ENCODE measurements at regions of chr2 and their contacts with region 1.

Region 1: DNA sequence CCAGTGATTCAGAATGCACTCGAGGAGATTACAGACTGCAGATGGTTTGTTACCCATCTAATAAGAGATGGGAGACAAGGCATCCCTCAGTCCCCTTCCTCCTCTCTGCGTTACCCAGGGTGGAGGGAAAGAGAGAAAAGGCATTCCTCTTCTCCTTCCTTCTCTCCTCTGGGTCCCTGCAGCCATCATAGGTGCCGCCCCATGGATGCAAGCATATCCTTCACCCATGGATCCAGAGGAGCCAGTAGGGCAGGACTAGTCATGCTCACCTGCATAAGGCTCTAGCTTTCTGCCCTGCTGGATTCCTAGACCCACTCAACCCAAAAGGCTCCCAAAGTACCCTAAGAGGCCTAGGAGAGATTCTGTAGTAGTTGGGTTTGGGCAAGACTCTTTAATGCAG is 20.4 kb downstream of the CMPK2 start:
- DNase-seq: peak; percentile 41 to 70 (median 52)
- ATAC-seq: no peak
- H3K4me3 ChIP-seq: no peak overlapping the region
- H3K27ac ChIP-seq: no peak overlapping the region
- H3K4me1 ChIP-seq: peaks cover 5 to 13% of the 10 kb centered on the region in 2 experiments; a peak in 4 of 5 replicates
- H3K27me3 ChIP-seq: no peaks in the 10 kb centered on the region
- CTCF ChIP-seq: no peak
- EP300 ChIP-seq: no peak; the same call in 1 of the 2 replicates
- POLR2A ChIP-seq: no peak
- RAD21 ChIP-seq: no peak

Region 2: DNA sequence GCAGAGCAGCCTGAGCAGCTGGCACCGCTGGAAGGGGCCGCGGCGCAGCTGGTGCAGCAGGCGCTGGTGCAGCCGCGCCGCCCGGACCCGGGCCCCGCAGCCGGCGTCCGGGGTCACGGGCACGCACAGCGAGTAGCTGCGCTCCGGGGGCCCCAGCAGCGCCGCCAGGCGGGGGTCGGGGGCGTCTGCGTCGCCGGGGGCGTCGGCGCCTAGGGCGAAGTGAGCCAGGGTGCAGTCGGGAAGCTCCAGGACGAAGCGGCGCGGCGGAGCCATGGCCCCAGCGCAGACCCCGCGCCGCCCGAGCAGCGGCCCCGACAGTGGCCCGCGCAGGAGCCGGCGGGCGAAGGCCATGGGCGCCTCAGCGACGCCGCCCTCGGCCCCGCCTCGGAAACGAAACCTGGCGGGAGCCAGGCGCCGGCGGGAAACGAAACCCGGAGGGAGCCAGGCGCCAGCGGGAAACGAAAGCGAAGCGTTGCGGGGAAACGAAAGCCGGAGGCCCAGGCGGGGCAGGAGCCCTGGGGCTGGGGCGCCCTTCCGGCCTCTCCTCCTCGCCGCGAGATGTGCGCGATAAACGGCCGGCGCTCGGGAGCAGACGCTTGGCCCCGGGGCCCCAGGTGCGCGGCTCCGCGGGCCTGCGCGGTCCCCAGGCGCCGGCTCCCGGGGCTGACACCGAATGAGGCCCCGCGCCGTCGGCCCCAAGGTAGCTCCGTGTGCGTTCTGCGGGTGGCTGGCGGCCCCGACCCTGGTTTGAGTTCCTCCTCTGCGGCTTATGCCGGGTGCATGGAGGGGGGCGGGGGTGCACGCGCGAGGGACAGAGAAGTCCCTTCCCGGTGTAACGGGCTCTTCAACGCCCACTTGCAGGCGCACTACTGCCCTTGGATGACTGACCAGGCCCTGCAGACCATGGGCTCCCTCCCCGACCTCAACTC is 20.3 kb after region 1 on chr2 and contains the start of gene CMPK2:
- CTCF ChIA-PET with region 1: no interaction called
- POLR2A ChIA-PET with region 1: interaction called, 21 read pairs
- in situ Hi-C with region 1: no loop called
- intact Hi-C with region 1: loop called (anchors 1 kb)
- DNase-seq: peak; percentile 75 to 84 (median 82)
- ATAC-seq: peak; percentile 88
- H3K4me3 ChIP-seq: peak within 1 kb of the TSS; percentile 58
- H3K27ac ChIP-seq: peak within 1 kb of the TSS; percentile 86
- H3K4me1 ChIP-seq: peaks cover 14 to 19% of the 10 kb centered on the region in 2 experiments
- H3K27me3 ChIP-seq: no peaks in the 10 kb centered on the region
- CTCF ChIP-seq: peak; percentile 31 to 46 (median 36); a peak in 3 of 6 replicates
- EP300 ChIP-seq: peak; percentile 40; the same call in 1 of the 2 replicates
- POLR2A ChIP-seq: peak; percentile 57; the same call in 1 of the 2 replicates
- RAD21 ChIP-seq: peak in 1 of 2 experiments; percentile 33; a peak in 2 of 4 replicates
- polyA plus RNA-seq, gene CMPK2: 2.6 to 2.9 TPM

Region 3: GRCh38 chr2:6887751-6888192 is 42.5 kb after region 1 on chr2:
- CTCF ChIA-PET with region 1: no interaction called
- POLR2A ChIA-PET with region 1: interaction called, 10 read pairs
- in situ Hi-C with region 1: no loop called
- intact Hi-C with region 1: loop called (anchors 1 kb)
- DNase-seq: peak; percentile 76 to 94 (median 78)
- ATAC-seq: peak; percentile 92
- H3K4me3 ChIP-seq: no peak overlapping the region
- H3K27ac ChIP-seq: peak overlapping the region; percentile 73
- H3K4me1 ChIP-seq: peaks cover 20 to 66% of the 10 kb centered on the region in 2 experiments
- H3K27me3 ChIP-seq: no peaks in the 10 kb centered on the region
- CTCF ChIP-seq: peak in 2 of 3 experiments; percentile 5 to 15; a peak in 1 of 6 replicates
- EP300 ChIP-seq: peak; percentile 92
- POLR2A ChIP-seq: no peak
- RAD21 ChIP-seq: peak in 1 of 2 experiments; percentile 17; a peak in 1 of 4 replicates

Region 4: DNA sequence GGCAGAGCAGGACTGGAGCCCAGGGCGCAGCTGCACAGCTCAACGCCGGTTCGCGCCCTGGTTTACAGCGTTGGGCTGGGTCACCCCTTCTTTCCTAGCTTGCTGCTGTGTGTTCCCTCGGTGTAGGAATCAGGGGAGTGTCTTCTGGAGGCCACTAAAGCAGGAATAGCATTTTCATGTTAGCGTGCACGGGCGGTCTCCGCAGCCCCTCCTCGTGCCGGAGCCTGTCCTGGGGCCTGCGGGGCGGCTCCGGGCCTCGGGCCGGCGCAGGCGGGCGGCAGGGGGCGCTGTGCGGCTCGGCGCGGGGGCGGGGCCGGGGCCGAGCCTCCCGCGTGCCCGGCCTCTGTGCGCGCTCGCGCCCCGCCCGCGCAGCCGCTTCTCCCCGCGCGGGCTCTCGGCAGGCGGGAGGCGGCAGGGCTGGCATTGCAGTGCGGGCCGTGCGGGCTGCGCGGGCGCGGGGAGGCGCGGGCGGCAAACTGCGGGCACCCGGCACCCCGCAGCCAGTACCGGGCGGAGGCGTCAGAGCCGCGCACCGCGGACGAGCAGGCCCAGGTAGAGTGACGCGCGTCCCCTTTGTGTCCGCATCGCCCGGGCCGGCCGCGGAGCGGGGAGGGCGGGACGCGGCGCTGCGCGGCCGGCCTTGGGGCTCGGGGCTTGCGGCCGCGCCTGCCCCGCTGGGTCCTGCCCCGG is 71.9 kb after region 1 on chr2 and contains the start of gene RNF144A:
- CTCF ChIA-PET with region 1: no interaction called
- POLR2A ChIA-PET with region 1: no interaction called
- in situ Hi-C with region 1: no loop called
- intact Hi-C with region 1: loop called (anchors 2 kb)
- DNase-seq: peak; percentile 75 to 93 (median 92)
- ATAC-seq: peak; percentile 88
- H3K4me3 ChIP-seq: peak within 1 kb of the TSS; percentile 61
- H3K27ac ChIP-seq: peak within 1 kb of the TSS; percentile 51; the same call in 1 of the 3 replicates
- H3K4me1 ChIP-seq: peaks cover 3 to 25% of the 10 kb centered on the region in 2 experiments; a peak in 4 of 5 replicates
- H3K27me3 ChIP-seq: 0 out of 5 replicates have a peak, but pooled peaks cover 0 to 4% of the 10 kb centered on the region in 2 experiments
- CTCF ChIP-seq: peak; percentile 25 to 54 (median 53); a peak in 4 of 6 replicates
- EP300 ChIP-seq: no peak
- POLR2A ChIP-seq: no peak
- RAD21 ChIP-seq: peak in 1 of 2 experiments; percentile 39; a peak in 2 of 4 replicates
- polyA plus RNA-seq, gene RNF144A: 0.96 to 1.4 TPM

Region 5: DNA sequence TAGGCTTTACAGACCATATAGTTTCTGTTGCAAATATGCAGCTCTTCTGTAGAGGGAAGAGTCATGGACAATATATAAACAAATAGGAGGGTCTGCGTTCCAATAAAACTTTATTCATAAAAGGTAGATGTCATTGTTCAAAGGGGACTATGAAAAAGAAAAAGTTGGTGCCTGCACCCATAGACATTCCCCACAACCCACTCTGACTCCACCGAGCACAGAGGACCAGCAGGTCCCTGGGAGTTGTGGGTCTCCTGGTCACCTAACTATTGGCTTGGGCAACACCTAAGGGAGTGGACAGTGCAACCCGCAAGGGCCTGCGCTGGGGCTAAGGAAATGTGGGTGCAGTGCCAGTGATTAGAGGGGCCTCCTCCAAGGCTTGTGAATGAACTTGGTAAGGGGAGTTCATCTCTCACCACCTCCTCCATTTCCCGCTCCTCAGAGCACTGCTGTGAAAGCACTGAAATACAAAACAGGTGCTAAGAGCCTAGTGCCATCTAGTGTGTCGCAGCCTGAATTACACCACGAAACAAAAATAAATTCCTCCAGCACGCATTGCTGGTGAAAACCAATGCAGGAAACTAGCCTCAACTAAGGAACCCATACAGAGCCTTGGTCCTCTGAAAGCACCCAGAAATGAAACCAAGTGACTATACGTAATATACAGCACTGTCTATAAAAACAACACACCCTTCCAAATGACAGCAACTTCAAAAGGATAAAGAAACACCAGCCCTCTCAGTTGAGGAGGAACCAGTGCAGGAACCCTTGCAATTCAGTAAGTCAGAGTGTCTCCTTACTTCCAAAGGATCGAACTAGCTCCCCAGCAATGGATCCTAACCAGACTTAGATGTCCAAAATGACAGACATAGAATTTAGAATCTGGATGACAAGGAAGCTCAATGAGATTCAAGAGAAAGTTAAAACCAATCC is 238.5 kb after region 1 on chr2:
- CTCF ChIA-PET with region 1: no interaction called
- POLR2A ChIA-PET with region 1: no interaction called
- in situ Hi-C with region 1: no loop called
- intact Hi-C with region 1: loop called (anchors 5 kb)
- DNase-seq: peak; percentile 11 to 68 (median 30)
- ATAC-seq: peak; percentile 95
- H3K4me3 ChIP-seq: no peak overlapping the region
- H3K27ac ChIP-seq: no peak overlapping the region
- H3K4me1 ChIP-seq: no peaks in the 10 kb centered on the region
- H3K27me3 ChIP-seq: peaks cover 2 to 6% of the 10 kb centered on the region in 2 experiments; a peak in 2 of 5 replicates
- CTCF ChIP-seq: peak; percentile 71 to 86 (median 82)
- EP300 ChIP-seq: no peak
- POLR2A ChIP-seq: no peak
- RAD21 ChIP-seq: peak; percentile 64 to 88